CD14-positive monocyte (primary cell): ENCODE measurements at regions of chr15 and their contacts with region 1.

Region 1: DNA sequence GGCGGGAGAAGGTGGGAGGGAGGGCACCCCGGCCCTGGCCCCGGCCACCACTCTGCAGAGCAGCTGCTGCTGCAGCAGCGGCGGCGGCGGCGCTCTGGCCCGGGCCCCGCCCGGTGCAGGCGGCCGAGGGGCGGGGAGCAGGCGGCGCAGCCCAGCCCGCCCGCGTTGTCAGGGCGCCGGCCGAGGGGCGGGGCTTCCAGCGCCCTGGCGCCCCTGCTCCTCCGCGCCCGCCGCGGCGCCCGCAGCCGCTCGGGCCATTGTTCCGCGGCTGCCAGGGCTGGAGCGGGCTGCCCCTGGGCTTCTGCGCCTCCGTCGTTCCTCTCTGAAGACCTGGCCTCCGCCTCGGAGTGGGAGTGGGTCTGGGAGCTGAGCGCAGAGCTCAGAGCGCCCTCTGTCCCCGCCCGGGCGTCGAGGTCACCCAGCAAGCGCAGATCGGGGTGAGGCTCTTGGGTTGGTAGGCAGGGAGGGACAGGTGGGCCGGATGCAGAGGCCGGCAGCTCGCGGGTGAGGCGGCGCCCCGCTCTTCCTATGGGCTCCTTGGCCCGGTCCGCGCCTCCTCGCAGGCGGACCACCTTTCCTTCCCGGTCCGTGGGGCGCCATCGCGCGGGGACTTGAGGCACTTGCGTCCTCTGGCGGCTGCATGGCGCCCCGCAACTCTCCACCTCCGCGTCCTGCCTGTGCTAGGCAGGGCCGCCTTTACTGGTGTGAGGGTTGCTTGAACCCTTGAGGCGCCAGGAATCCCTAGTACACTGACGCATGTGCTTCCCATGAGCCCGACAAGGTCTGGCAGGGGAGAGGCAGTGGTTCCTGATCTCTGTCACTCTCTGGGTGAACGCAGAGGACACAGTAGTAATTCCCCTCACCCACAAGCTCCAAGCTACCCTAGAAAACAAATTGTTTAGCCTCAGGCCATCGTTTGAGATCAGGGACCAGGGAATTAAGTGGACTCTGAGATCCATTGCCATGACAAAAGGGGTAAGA is at the start of gene LPCAT4:
- DNase-seq: peak; percentile 72 to 77 (median 75)
- H3K4me3 ChIP-seq: peak within 1 kb of the TSS; percentile 85 to 91 (median 89)
- H3K4me3 Mint-ChIP-seq: peak within 1 kb of the TSS; percentile 93 to 98
- H3K27ac ChIP-seq: peak within 1 kb of the TSS; percentile 73 to 75
- H3K27ac Mint-ChIP-seq: peak within 1 kb of the TSS; percentile 79 to 95 (median 91)
- H3K4me1 ChIP-seq: peaks cover 20 to 26% of the 10 kb centered on the region in 2 donors
- H3K4me1 Mint-ChIP-seq: peaks cover 32% of the 10 kb centered on the region
- H3K27me3 ChIP-seq: no peaks in the 10 kb centered on the region
- H3K27me3 Mint-ChIP-seq: peaks cover 2 to 4% (median 3%) of the 10 kb centered on the region in 3 donors
- CTCF ChIP-seq: peak; percentile 98
- polyA plus RNA-seq, gene LPCAT4: 3.3 to 39.5 (median 4.2) TPM

Region 2: GRCh38 chr15:34241372-34242330 is 125.7 kb before region 1 on chr15:
- intact Hi-C with region 1: loop called in 1 of 2 experiments (anchors 10 kb)
- DNase-seq: peak; percentile 15 to 53 (median 35)
- H3K4me3 ChIP-seq: no peak overlapping the region
- H3K4me3 Mint-ChIP-seq: no peak overlapping the region
- H3K27ac ChIP-seq: no peak overlapping the region
- H3K27ac Mint-ChIP-seq: no peak overlapping the region
- H3K4me1 ChIP-seq: no peaks in the 10 kb centered on the region
- H3K4me1 Mint-ChIP-seq: no peaks in the 10 kb centered on the region
- H3K27me3 ChIP-seq: no peaks in the 10 kb centered on the region
- H3K27me3 Mint-ChIP-seq: peaks cover 0 to 2% (median 0%) of the 10 kb centered on the region in 3 donors
- CTCF ChIP-seq: peak; percentile 88

Region 3: DNA sequence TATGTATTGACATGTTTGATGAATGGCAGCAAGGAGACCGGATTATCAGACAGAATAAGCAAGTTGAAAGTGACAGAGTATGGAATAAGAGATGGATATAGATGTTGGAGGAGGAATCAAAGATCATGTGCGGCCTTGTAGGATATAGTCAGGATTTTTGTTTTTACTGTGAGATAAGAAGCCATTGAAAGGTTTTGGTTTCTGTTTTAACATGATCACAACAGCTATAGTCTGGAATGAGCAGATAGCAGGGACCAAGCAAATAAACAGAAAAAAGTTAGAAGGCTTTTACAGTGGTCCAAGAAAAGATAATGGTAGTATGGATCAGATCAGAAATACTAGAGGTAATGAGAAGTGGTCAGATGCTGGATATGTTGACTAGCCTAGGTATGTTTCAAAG is 82.5 kb before region 1 on chr15:
- intact Hi-C with region 1: loop called in 1 of 2 experiments (anchors 10 kb)
- DNase-seq: no peak
- H3K4me3 ChIP-seq: no peak overlapping the region
- H3K4me3 Mint-ChIP-seq: no peak overlapping the region
- H3K27ac ChIP-seq: no peak overlapping the region
- H3K27ac Mint-ChIP-seq: peak overlapping the region in 2 of 7 donors; percentile 17 to 54
- H3K4me1 ChIP-seq: no peaks in the 10 kb centered on the region
- H3K4me1 Mint-ChIP-seq: peaks cover 3% of the 10 kb centered on the region
- H3K27me3 ChIP-seq: no peaks in the 10 kb centered on the region
- H3K27me3 Mint-ChIP-seq: no peaks in the 10 kb centered on the region
- CTCF ChIP-seq: no peak

Region 4: GRCh38 chr15:34331809-34332208 is 35.6 kb before region 1 on chr15:
- intact Hi-C with region 1: no loop called
- DNase-seq: no peak
- H3K4me3 ChIP-seq: no peak overlapping the region
- H3K4me3 Mint-ChIP-seq: no peak overlapping the region
- H3K27ac ChIP-seq: peak overlapping the region in 1 of 2 donors; percentile 32
- H3K27ac Mint-ChIP-seq: peak overlapping the region in 6 of 7 donors; percentile 0 to 79 (median 53)
- H3K4me1 ChIP-seq: peaks cover 41 to 50% of the 10 kb centered on the region in 2 donors
- H3K4me1 Mint-ChIP-seq: peaks cover 52% of the 10 kb centered on the region
- H3K27me3 ChIP-seq: no peaks in the 10 kb centered on the region
- H3K27me3 Mint-ChIP-seq: peaks cover 0 to 2% (median 0%) of the 10 kb centered on the region in 3 donors
- CTCF ChIP-seq: no peak

Region 5: GRCh38 chr15:34342737-34343575 is 24.4 kb before region 1 on chr15 and contains the starts of genes NOP10 and NUTM1:
- intact Hi-C with region 1: loop called (anchors 1 to 2 kb)
- DNase-seq: peak; percentile 90 to 93 (median 91)
- H3K4me3 ChIP-seq: peak within 1 kb of the TSS; percentile 62 to 96 (median 96)
- H3K4me3 Mint-ChIP-seq: no peak within 1 kb of the TSS
- H3K27ac ChIP-seq: peak within 1 kb of the TSS; percentile 43 to 86
- H3K27ac Mint-ChIP-seq: peak within 1 kb of the TSS in 2 of 7 donors; percentile 26 to 84
- H3K4me1 ChIP-seq: peaks cover 26 to 29% of the 10 kb centered on the region in 2 donors
- H3K4me1 Mint-ChIP-seq: peaks cover 28% of the 10 kb centered on the region
- H3K27me3 ChIP-seq: no peaks in the 10 kb centered on the region
- H3K27me3 Mint-ChIP-seq: peaks cover 0 to 2% (median 2%) of the 10 kb centered on the region in 3 donors
- CTCF ChIP-seq: peak; percentile 95
- polyA plus RNA-seq, gene NOP10: 260 to 677 (median 586) TPM
- polyA plus RNA-seq, gene NUTM1: not detected

Region 6: DNA sequence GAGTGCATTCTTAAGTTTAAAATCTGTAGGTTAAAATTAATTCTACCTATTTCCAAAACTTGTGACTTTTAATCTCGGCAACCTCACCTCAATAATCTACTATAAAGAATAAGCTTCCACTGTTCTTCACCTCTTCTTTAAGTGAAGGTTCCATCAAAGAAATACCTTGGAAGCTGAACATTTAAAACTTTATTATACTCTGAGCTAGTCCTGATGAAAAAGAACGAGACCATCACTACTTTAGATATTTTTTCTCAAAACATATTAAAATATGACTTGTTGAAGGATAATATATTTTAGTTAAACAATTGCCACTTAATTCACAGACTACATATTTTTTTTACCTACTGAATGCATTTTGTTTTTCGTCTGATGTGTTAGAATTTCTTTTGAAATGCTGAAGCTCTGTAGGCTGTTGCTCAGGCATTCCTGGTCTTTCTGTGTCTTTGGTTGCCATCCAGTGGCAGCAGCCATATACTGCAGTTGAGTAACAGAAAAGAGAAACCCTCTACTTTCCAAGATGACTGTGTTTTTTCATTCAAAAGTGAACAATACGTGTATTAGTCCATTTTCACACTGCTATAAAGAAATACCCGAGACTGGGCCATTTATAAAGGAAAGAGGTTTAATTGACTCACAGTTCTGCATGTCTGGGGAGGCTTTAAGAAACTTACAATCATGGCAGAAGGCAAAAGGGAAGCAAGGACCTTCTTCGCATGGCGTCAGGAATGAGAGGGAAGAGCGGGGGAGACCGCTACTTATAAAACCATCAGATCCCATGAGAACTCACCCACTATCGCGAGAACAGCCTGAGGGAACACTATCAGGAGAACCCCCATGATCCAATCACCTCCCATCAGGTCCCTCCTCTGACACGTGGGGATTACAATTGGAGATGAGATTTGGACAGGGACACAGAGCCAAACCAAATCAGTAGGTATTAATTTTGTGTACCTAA is 220.6 kb after region 1 on chr15:
- intact Hi-C with region 1: loop called in 1 of 2 experiments (anchors 10 kb)
- DNase-seq: peak in 2 of 3 donors; percentile 34 to 48
- H3K4me3 ChIP-seq: peak overlapping the region in 1 of 3 experiments; percentile 49
- H3K4me3 Mint-ChIP-seq: peak overlapping the region; percentile 50 to 82
- H3K27ac ChIP-seq: no peak overlapping the region
- H3K27ac Mint-ChIP-seq: peak overlapping the region in 2 of 7 donors; percentile 45 to 57
- H3K4me1 ChIP-seq: peaks cover 8 to 12% of the 10 kb centered on the region in 2 donors
- H3K4me1 Mint-ChIP-seq: peaks cover 8% of the 10 kb centered on the region
- H3K27me3 ChIP-seq: peaks cover 15 to 21% of the 10 kb centered on the region in 2 donors
- H3K27me3 Mint-ChIP-seq: peaks cover 21 to 30% (median 26%) of the 10 kb centered on the region in 3 donors
- CTCF ChIP-seq: peak; percentile 78

Region 7: GRCh38 chr15:34603134-34603533 is 235.7 kb after region 1 on chr15:
- intact Hi-C with region 1: no loop called
- DNase-seq: no peak
- H3K4me3 ChIP-seq: no peak overlapping the region
- H3K4me3 Mint-ChIP-seq: no peak overlapping the region
- H3K27ac ChIP-seq: no peak overlapping the region
- H3K27ac Mint-ChIP-seq: no peak overlapping the region
- H3K4me1 ChIP-seq: no peaks in the 10 kb centered on the region
- H3K4me1 Mint-ChIP-seq: no peaks in the 10 kb centered on the region
- H3K27me3 ChIP-seq: peaks cover 0 to 4% of the 10 kb centered on the region in 2 donors
- H3K27me3 Mint-ChIP-seq: peaks cover 2 to 3% (median 3%) of the 10 kb centered on the region in 3 donors
- CTCF ChIP-seq: no peak